HAP-1 (cell line): ENCODE measurements at regions of chr1 and their contacts with region 1.

Region 1: DNA sequence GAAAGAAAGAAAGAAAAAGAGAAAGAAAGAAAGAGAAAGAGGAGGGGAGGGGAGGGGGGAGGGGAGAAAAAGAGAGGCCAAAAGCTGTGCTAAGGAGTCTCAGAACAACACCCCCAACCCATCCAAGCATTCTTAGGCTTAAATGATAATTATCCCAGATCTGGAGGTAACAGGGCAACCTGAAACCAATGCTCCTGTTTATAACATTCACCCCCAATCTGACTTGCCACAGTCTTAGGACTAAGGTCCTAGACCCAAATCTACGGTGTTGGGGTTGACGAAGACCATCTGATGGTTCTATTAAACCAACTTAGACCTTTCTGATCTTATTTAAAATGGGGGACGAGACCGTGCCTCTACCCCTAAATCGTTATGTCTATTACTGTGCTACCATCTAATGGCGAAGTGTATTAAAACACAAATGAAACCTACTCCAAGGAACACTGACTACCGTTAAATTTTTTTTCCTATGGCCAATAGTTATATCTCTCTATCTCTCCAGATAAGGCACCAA is 119.3 kb upstream of the CDC42BPA start:
- DNase-seq: peak; percentile 26 to 71
- H3K4me3 ChIP-seq: peak overlapping the region; percentile 7; the same call in 1 of the 2 replicates
- H3K4me1 ChIP-seq: peaks cover 3% of the 10 kb centered on the region; the same call in 1 of the 2 replicates
- H3K27me3 ChIP-seq: no peaks in the 10 kb centered on the region

Region 2: DNA sequence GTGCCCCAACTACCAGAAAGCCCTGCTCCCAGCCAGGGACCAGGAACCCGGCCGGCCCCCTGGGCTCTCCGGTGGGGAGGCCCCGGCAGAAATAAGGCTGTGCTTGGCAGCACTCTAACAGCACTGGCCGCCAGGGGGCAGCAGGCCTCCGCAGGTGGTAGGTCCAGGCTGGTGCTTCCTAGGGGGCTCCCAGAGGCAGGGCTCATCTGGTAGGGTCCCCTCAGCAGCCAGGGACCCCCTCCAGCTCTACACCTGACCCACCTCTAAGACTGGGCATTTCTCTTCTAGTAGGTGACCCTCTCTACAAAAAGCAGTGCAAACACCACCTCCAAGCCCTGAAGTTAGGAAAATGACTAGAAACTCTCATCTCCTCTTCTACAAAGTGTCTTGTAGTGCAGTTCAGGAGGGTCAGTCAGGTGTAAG is 803.4 kb before region 1 on chr1:
- in situ Hi-C with region 1: loop called (anchors 10 kb)
- DNase-seq: peak; percentile 51 to 87
- H3K4me3 ChIP-seq: no peak overlapping the region
- H3K4me1 ChIP-seq: no peaks in the 10 kb centered on the region
- H3K27me3 ChIP-seq: no peaks in the 10 kb centered on the region